Activated CD8-positive, alpha-beta T cell treated with anti-CD3 and anti-CD28 coated beads for 36 hours (primary cell): ENCODE measurements at regions of chr4 and their contacts with region 1.

Region 1: DNA sequence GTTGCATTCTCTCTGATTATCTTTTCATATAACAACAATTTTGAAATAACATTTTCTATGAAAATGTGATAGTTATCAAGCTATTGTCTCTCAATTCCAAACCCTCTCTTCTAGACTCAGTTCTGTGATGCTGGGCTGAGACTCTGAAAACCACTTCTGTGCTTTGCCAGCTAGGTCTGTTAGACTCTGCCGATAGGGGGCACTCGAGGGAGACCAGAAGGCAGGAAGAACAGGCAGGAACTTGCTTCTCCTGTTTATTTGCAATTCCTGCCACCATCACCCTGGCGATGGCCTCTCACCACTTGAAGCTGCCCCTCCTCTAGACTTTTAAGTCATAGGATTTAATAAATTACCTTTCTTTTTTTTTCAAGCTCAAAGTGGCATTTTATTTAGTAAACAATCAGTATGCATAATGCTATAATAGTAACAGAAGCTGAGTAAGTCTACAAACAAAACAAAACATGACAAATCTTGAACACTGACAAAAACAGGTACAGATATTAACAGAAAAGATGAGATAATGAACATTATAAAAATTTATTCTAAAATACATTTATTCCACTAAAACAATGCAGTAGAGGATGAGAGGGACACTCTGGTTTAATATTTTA is 49.7 kb downstream of the RASL11B start:
- DNase-seq: peak; percentile 86
- ATAC-seq: no peak
- H3K4me3 Mint-ChIP-seq: no peak overlapping the region
- H3K27ac Mint-ChIP-seq: no peak overlapping the region
- H3K4me1 Mint-ChIP-seq: no peaks in the 10 kb centered on the region
- H3K27me3 Mint-ChIP-seq: no peaks in the 10 kb centered on the region
- CTCF ChIP-seq: peak; percentile 73

Region 2: DNA sequence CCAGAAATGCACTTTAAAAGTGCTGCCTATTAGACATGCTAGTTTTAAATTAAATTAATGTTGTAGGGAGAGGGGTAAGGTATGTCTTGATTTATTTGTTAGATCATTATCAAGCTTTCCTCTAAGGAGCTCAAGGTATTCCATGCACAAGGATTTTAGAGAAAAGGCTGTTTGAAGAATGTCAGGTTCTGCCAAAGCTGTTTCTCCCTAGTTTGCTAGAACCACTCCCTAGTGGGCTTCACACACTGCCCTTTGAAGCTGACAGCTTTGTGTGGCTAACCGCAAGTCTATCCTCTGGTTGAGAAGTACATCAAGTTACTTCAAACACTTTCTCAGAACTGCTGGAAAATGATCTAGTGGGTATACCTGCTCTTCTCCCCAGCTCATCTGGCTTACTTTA is 17.3 kb before region 1 on chr4:
- CTCF ChIA-PET with region 1: interaction called, 13 read pairs
- POLR2A ChIA-PET with region 1: no interaction called
- intact Hi-C with region 1: no loop called
- DNase-seq: peak; percentile 19
- ATAC-seq: no peak
- H3K4me3 Mint-ChIP-seq: no peak overlapping the region
- H3K27ac Mint-ChIP-seq: no peak overlapping the region
- H3K4me1 Mint-ChIP-seq: peaks cover 21% of the 10 kb centered on the region
- H3K27me3 Mint-ChIP-seq: no peaks in the 10 kb centered on the region
- CTCF ChIP-seq: no peak

Region 3: GRCh38 chr4:52925531-52925968 is 13.8 kb after region 1 on chr4:
- CTCF ChIA-PET with region 1: interaction called, 13 read pairs
- POLR2A ChIA-PET with region 1: no interaction called
- intact Hi-C with region 1: no loop called
- DNase-seq: no peak
- ATAC-seq: no peak
- H3K4me3 Mint-ChIP-seq: no peak overlapping the region
- H3K27ac Mint-ChIP-seq: no peak overlapping the region
- H3K4me1 Mint-ChIP-seq: no peaks in the 10 kb centered on the region
- H3K27me3 Mint-ChIP-seq: no peaks in the 10 kb centered on the region
- CTCF ChIP-seq: no peak